ENCODE measurements at regions of chr10 and their contacts with region 1.

Region 1: DNA sequence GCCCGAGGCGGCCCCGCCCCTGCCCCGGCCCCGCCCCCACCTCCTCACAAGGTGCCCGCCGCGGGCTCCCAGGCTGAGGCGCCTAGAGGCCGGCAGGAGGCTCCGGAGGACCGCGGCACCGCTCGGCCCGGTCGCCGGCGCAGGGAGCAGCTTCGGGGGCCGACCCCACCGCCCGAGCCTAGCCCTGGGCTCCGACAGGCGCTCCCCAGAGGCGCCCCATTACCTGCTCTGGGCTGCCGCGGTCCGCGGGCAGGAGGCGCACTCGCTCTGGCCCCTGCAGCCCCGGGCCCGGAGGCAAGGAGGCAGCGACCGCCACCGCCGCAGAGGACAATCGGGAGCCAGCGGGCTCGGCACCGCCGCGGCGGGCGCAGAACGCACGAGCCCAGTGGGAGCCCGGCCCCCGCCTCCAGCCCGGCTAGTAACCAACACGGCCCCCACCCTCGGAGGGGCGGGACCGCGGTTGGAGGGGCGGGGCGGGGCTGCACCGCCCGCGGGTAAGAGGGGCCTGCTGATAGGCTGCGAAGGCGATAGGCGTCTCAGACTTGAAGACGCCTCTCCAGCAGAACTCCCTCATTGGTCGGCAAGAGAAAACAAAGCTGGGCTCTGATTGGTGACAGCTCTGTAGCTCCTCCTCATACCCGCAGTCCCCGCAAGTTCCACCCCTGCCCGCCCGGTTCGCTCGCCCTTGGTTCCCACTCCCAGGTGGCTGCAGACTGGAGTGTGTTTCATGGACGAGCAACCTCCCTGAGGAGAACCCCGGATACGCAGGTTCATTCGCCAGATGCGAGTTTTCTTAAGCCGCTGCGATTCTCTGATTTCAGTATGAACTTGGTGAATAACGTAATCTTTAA is at the start of gene MPP7:
- DNase-seq: peak; percentile 97
- ATAC-seq: peak; percentile 87
- H3K4me3 ChIP-seq: peak within 1 kb of the TSS; percentile 55 to 96 (median 76)
- H3K4me3 Mint-ChIP-seq: peak within 1 kb of the TSS; percentile 94
- H3K27ac ChIP-seq: peak within 1 kb of the TSS; percentile 66 to 73
- H3K27ac Mint-ChIP-seq: peak within 1 kb of the TSS; percentile 80
- H3K4me1 ChIP-seq: peaks cover 17 to 19% of the 10 kb centered on the region in 2 donors
- H3K4me1 Mint-ChIP-seq: peaks cover 24% of the 10 kb centered on the region
- H3K27me3 ChIP-seq: peaks cover 0 to 29% (median 20%) of the 10 kb centered on the region in 4 experiments
- H3K27me3 Mint-ChIP-seq: peaks cover 33% of the 10 kb centered on the region
- CTCF ChIP-seq: peak; percentile 59
- total RNA-seq, gene MPP7: 13.1 and 13.6 TPM in 2 replicates

Region 2: GRCh38 chr10:27155066-27155754 is 1147.7 kb before region 1 on chr10 and contains the start of gene MASTL:
- CTCF ChIA-PET with region 1: no interaction called
- POLR2A ChIA-PET with region 1: no interaction called
- intact Hi-C with region 1: loop called (anchors 1 kb)
- DNase-seq: peak; percentile 98
- ATAC-seq: peak; percentile 86
- H3K4me3 ChIP-seq: peak within 1 kb of the TSS; percentile 73 to 99 (median 95)
- H3K4me3 Mint-ChIP-seq: peak within 1 kb of the TSS; percentile 96
- H3K27ac ChIP-seq: peak within 1 kb of the TSS; percentile 97
- H3K27ac Mint-ChIP-seq: peak within 1 kb of the TSS; percentile 100
- H3K4me1 ChIP-seq: peaks cover 20 to 29% of the 10 kb centered on the region in 2 donors
- H3K4me1 Mint-ChIP-seq: peaks cover 48% of the 10 kb centered on the region
- H3K27me3 ChIP-seq: no peaks in the 10 kb centered on the region
- H3K27me3 Mint-ChIP-seq: no peaks in the 10 kb centered on the region
- CTCF ChIP-seq: no peak
- total RNA-seq, gene MASTL: 12.4 and 13.6 TPM in 2 replicates

Region 3: GRCh38 chr10:27742195-27743011 is 560.5 kb before region 1 on chr10:
- CTCF ChIA-PET with region 1: no interaction called
- POLR2A ChIA-PET with region 1: no interaction called
- intact Hi-C with region 1: loop called (anchors 2 kb)
- DNase-seq: peak; percentile 67
- ATAC-seq: peak; percentile 86
- H3K4me3 ChIP-seq: peak overlapping the region; percentile 32 to 64 (median 55)
- H3K4me3 Mint-ChIP-seq: peak overlapping the region; percentile 78
- H3K27ac ChIP-seq: no peak overlapping the region
- H3K27ac Mint-ChIP-seq: no peak overlapping the region
- H3K4me1 ChIP-seq: peaks cover 39 to 60% of the 10 kb centered on the region in 2 donors
- H3K4me1 Mint-ChIP-seq: peaks cover 25% of the 10 kb centered on the region
- H3K27me3 ChIP-seq: peaks cover 0 to 69% (median 45%) of the 10 kb centered on the region in 4 experiments
- H3K27me3 Mint-ChIP-seq: peaks cover 53% of the 10 kb centered on the region
- CTCF ChIP-seq: peak; percentile 58

Region 4: DNA sequence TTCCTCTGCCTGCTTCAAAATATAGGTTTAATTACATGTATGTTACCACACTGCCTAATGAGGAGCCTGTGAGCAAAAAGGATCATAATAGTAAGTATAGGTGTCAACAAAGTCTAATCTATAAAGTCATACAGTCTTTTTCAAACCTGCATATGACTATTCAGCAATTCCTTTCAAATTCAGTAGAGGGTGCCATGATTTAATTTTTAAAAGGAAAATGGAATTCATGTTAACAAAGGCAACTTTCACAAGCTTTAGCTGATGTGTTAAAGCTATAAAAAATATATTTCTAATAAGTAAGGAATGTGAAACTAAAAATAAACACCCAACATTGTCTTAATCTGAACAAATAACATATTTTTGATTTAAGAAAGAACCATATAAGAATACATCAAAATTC is 52.1 kb before region 1 on chr10:
- CTCF ChIA-PET with region 1: interaction called, 36 read pairs
- POLR2A ChIA-PET with region 1: no interaction called
- intact Hi-C with region 1: loop called (anchors 5 kb)
- DNase-seq: peak; percentile 54
- ATAC-seq: no peak
- H3K4me3 ChIP-seq: no peak overlapping the region
- H3K4me3 Mint-ChIP-seq: no peak overlapping the region
- H3K27ac ChIP-seq: no peak overlapping the region
- H3K27ac Mint-ChIP-seq: no peak overlapping the region
- H3K4me1 ChIP-seq: no peaks in the 10 kb centered on the region
- H3K4me1 Mint-ChIP-seq: peaks cover 2% of the 10 kb centered on the region
- H3K27me3 ChIP-seq: peaks cover 0 to 2% (median 0%) of the 10 kb centered on the region in 4 experiments
- H3K27me3 Mint-ChIP-seq: peaks cover 20% of the 10 kb centered on the region
- CTCF ChIP-seq: peak; percentile 71

Region 5: DNA sequence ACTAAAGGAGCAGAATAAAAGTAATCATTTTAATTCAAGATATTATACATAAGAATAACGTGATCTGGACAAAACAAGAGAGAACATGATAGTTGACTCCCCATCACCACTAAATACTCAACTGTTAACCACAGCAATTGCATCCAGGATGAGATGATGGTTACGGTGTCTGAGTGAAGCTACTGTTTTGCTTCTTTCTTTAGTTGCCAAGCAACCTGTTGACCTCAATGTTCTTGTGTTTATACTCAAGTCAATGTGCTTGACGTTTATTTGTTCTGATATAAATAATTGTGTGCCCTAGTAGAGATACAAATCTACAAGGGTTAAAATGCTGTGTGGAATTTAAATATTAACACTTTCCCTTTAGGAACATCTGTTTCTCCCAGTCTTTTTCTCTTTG is 31.4 kb after region 1 on chr10:
- CTCF ChIA-PET with region 1: interaction called, 22 read pairs
- POLR2A ChIA-PET with region 1: interaction called, 7 read pairs
- intact Hi-C with region 1: loop called (anchors 1 kb)
- DNase-seq: peak; percentile 90
- ATAC-seq: peak; percentile 69
- H3K4me3 ChIP-seq: peak overlapping the region in 4 of 5 experiments; percentile 4 to 40 (median 24)
- H3K4me3 Mint-ChIP-seq: peak overlapping the region; percentile 89
- H3K27ac ChIP-seq: peak overlapping the region; percentile 74 to 97
- H3K27ac Mint-ChIP-seq: peak overlapping the region; percentile 97
- H3K4me1 ChIP-seq: peaks cover 26 to 33% of the 10 kb centered on the region in 2 donors
- H3K4me1 Mint-ChIP-seq: peaks cover 35% of the 10 kb centered on the region
- H3K27me3 ChIP-seq: no peaks in the 10 kb centered on the region
- H3K27me3 Mint-ChIP-seq: peaks cover 4% of the 10 kb centered on the region
- CTCF ChIP-seq: no peak

Region 6: GRCh38 chr10:28393966-28394568 is 91.2 kb after region 1 on chr10:
- CTCF ChIA-PET with region 1: interaction called, 24 read pairs
- POLR2A ChIA-PET with region 1: no interaction called
- intact Hi-C with region 1: no loop called
- DNase-seq: peak; percentile 73
- ATAC-seq: peak; percentile 66
- H3K4me3 ChIP-seq: no peak overlapping the region
- H3K4me3 Mint-ChIP-seq: no peak overlapping the region
- H3K27ac ChIP-seq: no peak overlapping the region
- H3K27ac Mint-ChIP-seq: no peak overlapping the region
- H3K4me1 ChIP-seq: peaks cover 0 to 5% of the 10 kb centered on the region in 2 donors
- H3K4me1 Mint-ChIP-seq: peaks cover 4% of the 10 kb centered on the region
- H3K27me3 ChIP-seq: no peaks in the 10 kb centered on the region
- H3K27me3 Mint-ChIP-seq: peaks cover 4% of the 10 kb centered on the region
- CTCF ChIP-seq: peak; percentile 97

Region 7: GRCh38 chr10:28425422-28425821 is 122.6 kb after region 1 on chr10:
- CTCF ChIA-PET with region 1: no interaction called
- POLR2A ChIA-PET with region 1: no interaction called
- intact Hi-C with region 1: no loop called
- DNase-seq: no peak
- ATAC-seq: no peak
- H3K4me3 ChIP-seq: no peak overlapping the region
- H3K4me3 Mint-ChIP-seq: no peak overlapping the region
- H3K27ac ChIP-seq: no peak overlapping the region
- H3K27ac Mint-ChIP-seq: no peak overlapping the region
- H3K4me1 ChIP-seq: no peaks in the 10 kb centered on the region
- H3K4me1 Mint-ChIP-seq: no peaks in the 10 kb centered on the region
- H3K27me3 ChIP-seq: peaks cover 0 to 2% (median 0%) of the 10 kb centered on the region in 4 experiments
- H3K27me3 Mint-ChIP-seq: peaks cover 3% of the 10 kb centered on the region
- CTCF ChIP-seq: no peak

Measured in B cell (primary cell).